PC-3 (cell line): ENCODE measurements at regions of chr12 and their contacts with region 1.

Region 1: DNA sequence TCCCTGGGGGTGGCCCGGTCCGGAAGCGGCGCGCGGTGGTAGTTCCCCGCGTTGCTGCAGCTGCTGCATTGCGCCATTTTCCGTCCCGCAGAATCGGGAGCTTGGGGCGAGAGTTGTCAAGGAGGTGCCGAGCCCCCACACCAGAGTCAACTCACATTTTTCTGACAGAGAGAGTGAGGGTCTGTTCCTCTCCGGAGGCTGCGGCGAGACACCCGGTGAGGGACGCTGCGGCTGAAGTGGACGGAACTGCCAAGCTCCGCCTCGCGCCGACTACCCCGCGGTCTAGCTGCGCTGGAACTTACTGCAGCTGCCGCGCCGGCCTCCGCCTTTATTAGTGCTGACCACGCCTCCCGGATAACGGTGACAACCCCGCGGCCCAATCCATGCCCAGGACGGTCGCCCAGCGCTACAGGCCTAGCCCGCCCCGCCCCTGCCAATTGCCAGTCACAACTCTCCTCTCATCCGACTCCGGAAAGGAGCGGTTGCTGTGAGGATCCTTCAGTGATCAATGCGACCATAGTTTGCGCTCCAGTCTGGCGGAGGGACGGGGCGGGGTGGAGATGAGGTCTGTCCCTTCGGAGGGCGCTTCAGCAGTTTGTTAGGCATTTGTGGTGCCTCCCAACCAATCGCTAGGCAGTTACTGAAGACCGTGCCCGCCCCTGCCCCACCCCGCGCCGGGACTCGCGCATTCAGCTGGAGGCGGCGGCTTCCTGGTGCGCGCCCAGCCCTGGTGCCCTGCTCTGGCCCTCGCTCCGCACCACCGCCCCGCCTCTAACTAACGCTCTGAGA is at the start of gene VAMP1:
- DNase-seq: peak; percentile 87
- ATAC-seq: peak; percentile 92
- H3K4me3 ChIP-seq: peak within 1 kb of the TSS; percentile 96
- H3K27ac ChIP-seq: peak within 1 kb of the TSS; percentile 41
- H3K4me1 ChIP-seq: peaks cover 25% of the 10 kb centered on the region
- H3K27me3 ChIP-seq: no peaks in the 10 kb centered on the region
- CTCF ChIP-seq: no peak
- total RNA-seq, gene VAMP1: 9.3 and 13.9 TPM in 2 replicates

Region 2: GRCh38 chr12:6323340-6323994 is 147.1 kb before region 1 on chr12:
- CTCF ChIA-PET with region 1: interaction called, 6 read pairs
- POLR2A ChIA-PET with region 1: no interaction called
- intact Hi-C with region 1: loop called (anchors 1 kb)
- DNase-seq: peak; percentile 86
- ATAC-seq: peak; percentile 53
- H3K4me3 ChIP-seq: no peak overlapping the region
- H3K27ac ChIP-seq: peak overlapping the region; percentile 62
- H3K4me1 ChIP-seq: peaks cover 23% of the 10 kb centered on the region
- H3K27me3 ChIP-seq: no peaks in the 10 kb centered on the region
- CTCF ChIP-seq: peak; percentile 81

Region 3: GRCh38 chr12:6423267-6424007 is 47.1 kb before region 1 on chr12:
- CTCF ChIA-PET with region 1: interaction called, 4 read pairs
- POLR2A ChIA-PET with region 1: no interaction called
- intact Hi-C with region 1: loop called (anchors 1 kb)
- DNase-seq: peak; percentile 84
- ATAC-seq: peak; percentile 95
- H3K4me3 ChIP-seq: no peak overlapping the region
- H3K27ac ChIP-seq: no peak overlapping the region
- H3K4me1 ChIP-seq: peaks cover 9% of the 10 kb centered on the region
- H3K27me3 ChIP-seq: no peaks in the 10 kb centered on the region
- CTCF ChIP-seq: peak; percentile 77

Region 4: GRCh38 chr12:6430124-6430989 is 40.2 kb before region 1 on chr12:
- CTCF ChIA-PET with region 1: no interaction called
- POLR2A ChIA-PET with region 1: no interaction called
- intact Hi-C with region 1: loop called (anchors 2 kb)
- DNase-seq: peak; percentile 94
- ATAC-seq: peak; percentile 90
- H3K4me3 ChIP-seq: peak overlapping the region; percentile 52
- H3K27ac ChIP-seq: peak overlapping the region; percentile 94
- H3K4me1 ChIP-seq: peaks cover 19% of the 10 kb centered on the region
- H3K27me3 ChIP-seq: no peaks in the 10 kb centered on the region
- CTCF ChIP-seq: no peak

Region 5: DNA sequence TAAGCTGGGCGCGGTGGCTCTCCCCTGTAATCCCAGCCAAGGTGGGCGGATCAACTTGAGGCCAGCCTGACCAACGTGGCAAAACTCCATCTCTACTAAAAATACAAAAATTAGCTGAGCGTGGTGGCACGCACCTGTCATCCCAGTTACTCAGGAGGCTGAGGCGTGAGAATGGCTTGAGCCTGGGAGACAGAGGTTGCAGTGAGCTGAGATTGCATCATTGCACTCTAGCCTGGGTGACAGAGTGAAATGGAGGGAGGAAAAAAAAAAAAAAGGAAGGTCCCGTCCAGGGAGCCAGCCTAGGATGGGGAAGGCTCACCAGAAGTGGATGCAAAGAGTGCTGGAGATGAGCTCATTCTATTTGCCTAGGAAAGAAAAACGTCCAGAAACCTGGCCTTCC is 27.7 kb before region 1 on chr12:
- CTCF ChIA-PET with region 1: no interaction called
- POLR2A ChIA-PET with region 1: no interaction called
- intact Hi-C with region 1: no loop called
- DNase-seq: no peak
- ATAC-seq: no peak
- H3K4me3 ChIP-seq: no peak overlapping the region
- H3K27ac ChIP-seq: no peak overlapping the region
- H3K4me1 ChIP-seq: no peaks in the 10 kb centered on the region
- H3K27me3 ChIP-seq: no peaks in the 10 kb centered on the region
- CTCF ChIP-seq: no peak

Region 6: GRCh38 chr12:6493497-6494257 is 23.1 kb after region 1 on chr12 and contains the start of gene NCAPD2:
- CTCF ChIA-PET with region 1: interaction called, 3 read pairs
- POLR2A ChIA-PET with region 1: interaction called, 9 read pairs
- intact Hi-C with region 1: loop called (anchors 2 kb)
- DNase-seq: peak; percentile 94
- ATAC-seq: peak; percentile 93
- H3K4me3 ChIP-seq: peak within 1 kb of the TSS; percentile 80
- H3K27ac ChIP-seq: peak within 1 kb of the TSS; percentile 91
- H3K4me1 ChIP-seq: peaks cover 19% of the 10 kb centered on the region
- H3K27me3 ChIP-seq: no peaks in the 10 kb centered on the region
- CTCF ChIP-seq: no peak
- total RNA-seq, gene NCAPD2: 105 TPM in 2 replicates